ENCODE measurements at regions of chr2 and their contacts with region 1.

Region 1: DNA sequence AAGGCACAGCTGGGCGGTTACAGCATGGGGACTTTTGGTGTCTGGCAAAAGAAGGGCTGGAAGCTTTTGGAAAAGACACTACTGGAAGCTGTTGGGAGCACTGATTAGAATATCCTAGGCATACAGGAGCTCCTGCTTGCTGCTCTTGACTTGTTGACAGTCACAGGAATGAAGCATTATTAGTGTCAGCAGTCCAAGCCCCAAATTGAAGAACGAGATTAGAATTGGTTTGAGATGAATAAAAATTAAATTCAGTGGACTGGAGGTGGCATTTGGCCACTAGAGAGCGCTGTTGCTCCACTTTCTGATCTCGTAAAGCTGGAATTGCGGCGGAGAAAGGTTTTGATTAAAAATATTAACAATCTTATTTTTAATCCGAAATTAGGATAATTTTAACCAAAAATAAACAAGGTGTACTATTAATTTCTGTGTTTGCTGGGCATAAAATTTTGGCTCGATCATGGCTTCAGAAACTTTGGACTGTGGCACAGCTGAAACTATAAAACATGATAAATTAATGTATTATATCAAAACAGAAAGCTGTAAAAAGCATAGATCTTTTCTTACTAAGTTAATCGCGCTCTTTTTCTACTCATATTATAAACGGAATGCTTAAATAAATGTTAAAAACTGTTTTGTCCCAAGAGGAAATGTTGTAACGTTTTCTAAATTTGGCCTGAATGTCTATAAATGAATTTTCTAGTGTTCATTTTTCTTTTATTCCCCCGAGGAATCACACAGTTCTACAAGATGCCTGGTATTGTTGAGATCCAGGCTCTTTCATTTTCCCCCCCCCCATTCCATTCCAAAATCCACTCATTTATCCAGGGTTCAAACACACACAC is 2.4 kb upstream of the HOXD8 start:
- DNase-seq: peak in 1 of 2 donors; percentile 42
- ATAC-seq: no peak
- H3K4me3 ChIP-seq: peak overlapping the region in 3 of 4 donors; percentile 17 to 29 (median 27)
- H3K27ac ChIP-seq: peak overlapping the region in 1 of 4 donors; percentile 87
- H3K4me1 ChIP-seq: peaks cover 6 to 7% of the 10 kb centered on the region in 2 donors
- H3K27me3 ChIP-seq: peaks cover 11 to 70% (median 55%) of the 10 kb centered on the region in 3 donors
- CTCF ChIP-seq: peak; percentile 76 to 95 (median 85)
- POLR2A ChIP-seq: no peak

Region 2: GRCh38 chr2:176187899-176188773 is 61.0 kb after region 1 on chr2 and contains the start of gene HOXD1:
- in situ Hi-C with region 1: no loop called
- intact Hi-C with region 1: loop called (anchors 2 kb)
- DNase-seq: no peak
- ATAC-seq: peak; percentile 73 to 77
- H3K4me3 ChIP-seq: peak within 1 kb of the TSS; percentile 65 to 77 (median 70)
- H3K27ac ChIP-seq: peak within 1 kb of the TSS in 1 of 4 donors; percentile 26
- H3K4me1 ChIP-seq: peaks cover 3 to 10% of the 10 kb centered on the region in 2 donors
- H3K27me3 ChIP-seq: peaks cover 38 to 53% (median 47%) of the 10 kb centered on the region in 3 donors
- CTCF ChIP-seq: no peak
- POLR2A ChIP-seq: no peak
- total RNA-seq, gene HOXD1: 0.20 TPM in 1 of 4 donors, not detected in the others

Region 3: DNA sequence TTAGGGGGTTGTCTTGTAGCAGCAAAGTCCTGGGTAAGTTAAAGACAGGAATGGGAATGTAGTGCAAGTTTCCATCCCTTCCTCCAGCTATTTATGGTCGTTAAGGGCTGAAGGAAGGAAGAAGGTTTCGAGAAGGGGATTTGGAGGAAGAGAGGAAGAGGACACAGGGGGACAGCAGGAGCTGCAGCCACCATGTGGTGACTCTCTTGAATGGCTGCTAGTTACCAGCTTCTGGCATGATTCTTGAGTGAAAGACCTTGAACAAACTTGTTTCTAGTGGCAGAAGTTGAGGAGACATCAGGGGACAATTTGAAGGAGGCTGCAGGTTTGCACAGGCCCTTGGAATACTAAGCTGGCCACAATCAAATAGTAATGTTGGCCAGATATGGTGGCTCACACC is 258.7 kb after region 1 on chr2:
- in situ Hi-C with region 1: no loop called
- intact Hi-C with region 1: no loop called
- DNase-seq: no peak
- ATAC-seq: no peak
- H3K4me3 ChIP-seq: no peak overlapping the region
- H3K27ac ChIP-seq: no peak overlapping the region
- H3K4me1 ChIP-seq: no peaks in the 10 kb centered on the region
- H3K27me3 ChIP-seq: no peaks in the 10 kb centered on the region
- CTCF ChIP-seq: no peak
- POLR2A ChIP-seq: no peak

Region 4: GRCh38 chr2:176554101-176555048 is 427.2 kb after region 1 on chr2:
- in situ Hi-C with region 1: loop called in 2 of 4 experiments (anchors 5 kb)
- intact Hi-C with region 1: loop called (anchors 2 kb)
- DNase-seq: no peak
- ATAC-seq: peak; percentile 64 to 76
- H3K4me3 ChIP-seq: peak overlapping the region; percentile 57 to 65 (median 62)
- H3K27ac ChIP-seq: peak overlapping the region; percentile 55 to 69 (median 61)
- H3K4me1 ChIP-seq: peaks cover 6 to 11% of the 10 kb centered on the region in 2 donors
- H3K27me3 ChIP-seq: no peaks in the 10 kb centered on the region
- CTCF ChIP-seq: peak; percentile 61 to 84 (median 70)
- POLR2A ChIP-seq: no peak

Region 5: GRCh38 chr2:176647325-176648155 is 520.4 kb after region 1 on chr2:
- in situ Hi-C with region 1: loop called in 1 of 4 experiments (anchors 5 kb)
- intact Hi-C with region 1: loop called (anchors 5 kb)
- DNase-seq: no peak
- ATAC-seq: no peak
- H3K4me3 ChIP-seq: no peak overlapping the region
- H3K27ac ChIP-seq: no peak overlapping the region
- H3K4me1 ChIP-seq: no peaks in the 10 kb centered on the region
- H3K27me3 ChIP-seq: peaks cover 0 to 11% (median 7%) of the 10 kb centered on the region in 3 donors
- CTCF ChIP-seq: no peak
- POLR2A ChIP-seq: no peak

Region 6: DNA sequence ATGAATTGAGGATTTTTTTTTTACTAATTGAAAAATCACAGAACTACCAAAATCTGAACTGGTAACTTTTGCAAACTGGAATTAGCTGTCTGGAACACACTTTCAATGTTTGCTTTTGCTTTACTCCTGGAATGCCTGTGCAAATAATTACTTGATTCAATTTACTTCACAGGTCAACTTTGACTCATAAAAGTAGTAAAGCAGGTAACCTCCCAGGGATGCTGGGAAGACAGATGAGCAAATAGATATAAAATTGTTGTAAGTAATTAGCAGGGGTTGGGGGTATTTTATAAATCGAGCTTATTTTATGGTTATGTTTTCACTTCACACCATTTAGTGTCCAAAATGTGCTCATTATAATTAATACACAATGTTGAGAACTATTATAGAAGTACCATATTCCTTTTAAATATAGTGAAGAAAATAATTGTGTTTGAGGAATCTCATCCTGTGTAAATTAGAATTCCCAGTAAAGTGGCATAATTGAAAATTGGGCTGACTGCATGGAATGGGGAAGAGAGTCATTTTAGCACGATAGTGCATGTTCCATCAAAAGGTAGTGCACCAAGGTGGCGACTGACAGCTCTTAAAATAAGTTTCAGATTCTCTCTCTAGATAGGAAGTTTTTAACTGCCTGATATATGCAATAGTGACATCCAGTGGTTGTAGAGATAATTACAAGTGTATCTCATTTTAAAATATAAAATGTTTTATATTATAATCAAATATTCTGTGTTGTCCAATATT is 687.3 kb after region 1 on chr2:
- in situ Hi-C with region 1: loop called in 3 of 4 experiments (anchors 25 kb)
- intact Hi-C with region 1: loop called (anchors 5 kb)
- DNase-seq: no peak
- ATAC-seq: no peak
- H3K4me3 ChIP-seq: no peak overlapping the region
- H3K27ac ChIP-seq: no peak overlapping the region
- H3K4me1 ChIP-seq: peaks cover 0 to 3% of the 10 kb centered on the region in 2 donors
- H3K27me3 ChIP-seq: no peaks in the 10 kb centered on the region
- CTCF ChIP-seq: peak in 3 of 5 experiments; percentile 32 to 73 (median 60)
- POLR2A ChIP-seq: no peak

Measured in gastrocnemius medialis (tissue), 4 donors.